ENCODE measurements at regions of chr1 and their contacts with region 1.

Region 1: GRCh38 chr1:177181631-177182291 is 11.0 kb downstream of the BRINP2 start:
- DNase-seq: peak; percentile 44 to 72 (median 54)
- ATAC-seq: peak; percentile 58 to 95 (median 84)
- H3K4me3 ChIP-seq: peak overlapping the region in 7 of 12 donors; percentile 11 to 36 (median 20)
- H3K27ac ChIP-seq: no peak overlapping the region
- H3K4me1 ChIP-seq: peaks cover 0 to 9% (median 0%) of the 10 kb centered on the region in 12 donors
- H3K27me3 ChIP-seq: peaks cover 0 to 29% (median 9%) of the 10 kb centered on the region in 9 donors
- CTCF ChIP-seq: peak; percentile 69 to 89 (median 79)
- POLR2A ChIP-seq: no peak

Region 2: DNA sequence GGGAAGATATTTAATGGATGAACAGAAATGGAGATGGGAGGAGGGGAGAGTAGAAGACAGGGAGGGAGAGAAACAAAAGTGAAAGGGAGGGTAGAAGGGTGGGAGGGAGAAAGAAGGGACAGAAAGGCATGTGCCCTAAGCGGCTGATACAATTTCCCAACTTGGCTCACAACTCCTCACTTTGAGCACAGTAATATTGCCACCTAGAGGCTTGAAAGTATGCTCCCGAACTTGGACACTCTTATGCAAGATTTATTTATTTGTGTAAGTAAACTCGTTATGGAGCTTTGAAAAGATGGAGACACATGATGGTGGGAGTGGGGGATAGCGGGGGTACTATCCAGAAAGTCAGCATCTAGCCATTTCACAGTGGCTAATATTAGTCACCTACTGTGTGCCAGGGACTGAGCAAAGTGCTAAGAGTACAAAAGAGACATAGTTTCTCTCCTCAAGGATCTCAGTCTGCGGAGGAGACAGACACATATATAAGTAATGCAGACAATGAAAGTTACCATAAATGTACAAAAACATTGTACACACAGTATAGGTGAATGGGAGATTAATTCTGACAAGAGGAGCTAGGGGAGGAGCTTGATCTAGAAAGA is 598.4 kb after region 1 on chr1:
- intact Hi-C with region 1: loop called in 1 of 10 experiments (anchors 10 kb)
- DNase-seq: no peak
- ATAC-seq: peak in 3 of 4 donors; percentile 56 to 64 (median 62)
- H3K4me3 ChIP-seq: no peak overlapping the region
- H3K27ac ChIP-seq: no peak overlapping the region
- H3K4me1 ChIP-seq: no peaks in the 10 kb centered on the region
- H3K27me3 ChIP-seq: peaks cover 0 to 14% (median 0%) of the 10 kb centered on the region in 9 donors
- CTCF ChIP-seq: peak; percentile 22 to 65 (median 44)
- POLR2A ChIP-seq: no peak

Region 3: GRCh38 chr1:177948336-177948972 is 766.7 kb after region 1 on chr1:
- intact Hi-C with region 1: loop called in 2 of 10 experiments (anchors 2 to 10 kb)
- DNase-seq: peak in 2 of 5 donors; percentile 40 to 45
- ATAC-seq: peak; percentile 24 to 67 (median 56)
- H3K4me3 ChIP-seq: no peak overlapping the region
- H3K27ac ChIP-seq: no peak overlapping the region
- H3K4me1 ChIP-seq: peaks cover 0 to 8% (median 0%) of the 10 kb centered on the region in 12 donors
- H3K27me3 ChIP-seq: no peaks in the 10 kb centered on the region
- CTCF ChIP-seq: peak; percentile 73 to 95 (median 86)
- POLR2A ChIP-seq: no peak